ENCODE measurements at regions of chr13 and their contacts with region 1.

Region 1: DNA sequence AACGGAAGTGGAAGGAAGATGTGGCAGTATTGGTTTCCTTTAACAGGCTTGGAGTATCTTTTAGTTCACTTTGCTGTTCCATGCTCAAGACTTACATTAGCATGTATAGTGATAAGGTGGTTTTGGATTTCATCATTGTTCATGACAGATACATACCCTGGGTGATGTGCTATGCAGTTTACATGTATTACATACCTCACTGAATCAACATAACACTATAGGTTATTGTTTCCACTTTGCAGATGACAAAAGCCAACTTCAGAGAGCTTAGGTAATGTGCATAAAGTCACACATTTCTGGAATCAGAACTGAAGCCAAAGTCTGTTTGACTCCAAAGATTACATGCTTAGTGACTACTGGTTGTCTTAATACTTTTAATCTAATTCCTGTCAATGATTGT is 7.1 kb downstream of the COMMD6 start:
- DNase-seq: no peak
- ATAC-seq: no peak
- H3K4me3 ChIP-seq: no peak overlapping the region
- H3K27ac ChIP-seq: no peak overlapping the region
- H3K4me1 ChIP-seq: peaks cover 0 to 18% (median 2%) of the 10 kb centered on the region in 12 donors
- H3K27me3 ChIP-seq: no peaks in the 10 kb centered on the region
- CTCF ChIP-seq: no peak
- POLR2A ChIP-seq: no peak

Region 2: DNA sequence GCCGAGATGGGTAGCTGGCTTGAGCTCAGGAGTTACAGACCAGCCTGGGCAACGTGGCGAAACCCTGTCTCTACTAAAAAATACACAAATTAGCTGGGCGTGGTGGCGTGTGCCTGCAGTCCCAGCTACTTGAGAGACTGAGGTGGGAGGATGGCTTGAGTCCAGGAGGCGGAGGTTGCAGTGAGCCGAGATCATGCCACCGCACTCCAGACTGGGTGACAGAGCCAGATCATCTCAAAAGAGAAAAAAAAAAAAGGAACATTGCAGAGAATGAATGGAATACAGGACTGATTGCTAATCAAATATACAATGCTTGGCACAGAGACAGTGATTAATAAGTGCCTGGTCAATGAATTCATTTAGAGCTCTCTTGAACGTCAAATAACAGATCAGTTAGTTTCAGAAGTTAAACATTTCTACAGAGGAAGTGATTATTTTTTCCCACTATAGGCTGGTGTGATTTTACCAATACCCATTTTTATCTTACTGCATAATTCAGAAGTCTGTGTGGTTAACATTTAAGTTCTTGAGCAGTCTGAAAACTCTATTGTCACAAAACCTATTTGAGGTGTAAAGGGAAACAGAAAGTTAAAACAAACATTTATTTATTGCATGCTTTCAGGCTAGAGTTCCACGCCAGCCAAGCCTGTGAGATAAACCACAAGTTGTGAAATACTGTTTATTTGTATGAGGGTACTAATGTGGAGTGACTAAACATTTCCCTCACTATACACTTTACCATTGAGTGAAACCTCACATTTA is 40.9 kb before region 1 on chr13:
- intact Hi-C with region 1: loop called in 6 of 10 experiments (anchors 5 to 10 kb)
- DNase-seq: no peak
- ATAC-seq: no peak
- H3K4me3 ChIP-seq: no peak overlapping the region
- H3K27ac ChIP-seq: no peak overlapping the region
- H3K4me1 ChIP-seq: peaks cover 0 to 5% (median 0%) of the 10 kb centered on the region in 12 donors
- H3K27me3 ChIP-seq: no peaks in the 10 kb centered on the region
- CTCF ChIP-seq: no peak
- POLR2A ChIP-seq: no peak